Activated CD4-positive, alpha-beta T cell treated with anti-CD3 and anti-CD28 coated beads for 36 hours (primary cell): ENCODE measurements at regions of chr10 and their contacts with region 1.

Region 1: GRCh38 chr10:98467506-98468346 is 21.0 kb upstream of the HPS1 start:
- DNase-seq: peak; percentile 76
- ATAC-seq: peak; percentile 98
- H3K4me3 Mint-ChIP-seq: peak overlapping the region; percentile 75
- H3K27ac Mint-ChIP-seq: peak overlapping the region; percentile 75
- H3K4me1 Mint-ChIP-seq: peaks cover 6% of the 10 kb centered on the region
- H3K27me3 Mint-ChIP-seq: peaks cover 15% of the 10 kb centered on the region

Region 2: GRCh38 chr10:98664331-98665042 is 196.8 kb after region 1 on chr10:
- CTCF ChIA-PET with region 1: interaction called, 16 read pairs
- POLR2A ChIA-PET with region 1: no interaction called
- intact Hi-C with region 1: loop called (anchors 1 kb)
- DNase-seq: peak; percentile 49
- ATAC-seq: peak; percentile 70
- H3K4me3 Mint-ChIP-seq: no peak overlapping the region
- H3K27ac Mint-ChIP-seq: no peak overlapping the region
- H3K4me1 Mint-ChIP-seq: no peaks in the 10 kb centered on the region
- H3K27me3 Mint-ChIP-seq: peaks cover 25% of the 10 kb centered on the region

Region 3: DNA sequence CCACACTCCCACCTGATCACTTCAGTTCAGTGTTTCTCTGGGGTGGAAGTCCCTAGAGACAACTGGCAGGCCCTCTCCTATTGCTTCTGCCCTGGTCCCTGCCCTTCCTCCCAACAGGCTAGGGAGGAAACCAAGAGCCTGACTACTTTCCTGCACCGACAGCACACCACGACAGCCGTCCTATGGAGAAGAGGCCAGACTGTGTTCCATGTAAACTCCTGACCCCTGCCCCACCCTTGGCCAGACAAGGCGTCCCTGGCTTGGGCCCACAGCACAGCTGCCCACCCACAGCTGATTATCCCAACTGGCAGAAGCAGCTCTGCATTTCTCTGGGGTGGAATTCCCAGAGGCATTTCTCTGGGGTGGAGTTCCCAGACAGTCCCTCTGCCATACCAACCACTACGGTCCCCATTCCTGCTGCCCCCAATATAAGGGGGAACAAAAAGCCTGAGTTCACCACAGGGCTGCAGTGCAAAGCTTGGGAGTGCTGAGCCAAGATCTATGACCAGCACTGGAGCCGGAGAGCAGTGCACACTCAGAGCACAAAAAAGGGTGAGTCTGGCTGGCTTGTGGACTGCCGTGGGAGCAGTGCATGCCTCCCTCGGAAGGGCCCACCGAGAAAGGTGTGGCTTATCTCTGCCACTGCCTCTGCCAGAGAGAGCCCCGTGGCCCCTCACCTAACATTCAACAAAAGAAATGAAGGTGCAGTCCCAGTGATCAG is 574.5 kb after region 1 on chr10:
- CTCF ChIA-PET with region 1: interaction called, 6 read pairs
- POLR2A ChIA-PET with region 1: no interaction called
- intact Hi-C with region 1: loop called (anchors 1 to 5 kb)
- DNase-seq: no peak
- ATAC-seq: no peak
- H3K4me3 Mint-ChIP-seq: no peak overlapping the region
- H3K27ac Mint-ChIP-seq: no peak overlapping the region
- H3K4me1 Mint-ChIP-seq: no peaks in the 10 kb centered on the region
- H3K27me3 Mint-ChIP-seq: no peaks in the 10 kb centered on the region

Region 4: GRCh38 chr10:99248824-99249223 is 781.1 kb after region 1 on chr10:
- CTCF ChIA-PET with region 1: interaction called, 26 read pairs
- POLR2A ChIA-PET with region 1: no interaction called
- intact Hi-C with region 1: loop called (anchors 1 kb)
- DNase-seq: no peak
- ATAC-seq: no peak
- H3K4me3 Mint-ChIP-seq: no peak overlapping the region
- H3K27ac Mint-ChIP-seq: no peak overlapping the region
- H3K4me1 Mint-ChIP-seq: no peaks in the 10 kb centered on the region
- H3K27me3 Mint-ChIP-seq: peaks cover 31% of the 10 kb centered on the region

Region 5: DNA sequence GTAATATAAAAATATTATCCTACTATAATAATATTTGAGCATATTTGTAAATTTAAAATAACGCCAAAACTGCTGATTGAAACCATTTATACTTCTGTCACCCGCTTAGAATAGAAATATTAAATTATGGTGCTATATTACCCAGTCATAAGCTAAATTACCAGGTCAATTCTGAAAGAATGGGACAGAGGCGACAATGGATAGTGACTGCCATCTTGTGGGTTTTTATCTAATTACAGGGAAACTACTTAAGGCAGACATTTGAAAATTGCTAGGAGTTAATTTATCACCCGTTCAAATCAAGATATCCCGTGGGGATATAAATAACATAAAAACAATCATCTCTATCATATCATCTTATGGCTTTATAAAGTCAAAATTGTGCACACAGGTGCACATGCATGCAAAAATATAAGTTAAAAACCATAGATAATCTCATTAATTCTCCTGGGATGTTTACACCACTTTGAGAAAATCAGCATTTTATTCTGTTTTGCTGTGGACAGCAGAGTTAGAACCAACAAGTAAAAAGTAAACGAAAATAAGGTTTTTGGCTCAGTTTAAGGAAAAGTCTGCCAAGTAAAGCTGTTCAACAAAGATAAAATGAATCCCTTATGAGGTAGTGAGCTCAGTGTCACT is 809.2 kb after region 1 on chr10:
- CTCF ChIA-PET with region 1: interaction called, 5 read pairs
- POLR2A ChIA-PET with region 1: no interaction called
- intact Hi-C with region 1: loop called in 1 of 2 experiments (anchors 1 kb)
- DNase-seq: no peak
- ATAC-seq: no peak
- H3K4me3 Mint-ChIP-seq: no peak overlapping the region
- H3K27ac Mint-ChIP-seq: no peak overlapping the region
- H3K4me1 Mint-ChIP-seq: no peaks in the 10 kb centered on the region
- H3K27me3 Mint-ChIP-seq: peaks cover 19% of the 10 kb centered on the region